ENCODE measurements at regions of chr1 and their contacts with region 1.

Region 1: DNA sequence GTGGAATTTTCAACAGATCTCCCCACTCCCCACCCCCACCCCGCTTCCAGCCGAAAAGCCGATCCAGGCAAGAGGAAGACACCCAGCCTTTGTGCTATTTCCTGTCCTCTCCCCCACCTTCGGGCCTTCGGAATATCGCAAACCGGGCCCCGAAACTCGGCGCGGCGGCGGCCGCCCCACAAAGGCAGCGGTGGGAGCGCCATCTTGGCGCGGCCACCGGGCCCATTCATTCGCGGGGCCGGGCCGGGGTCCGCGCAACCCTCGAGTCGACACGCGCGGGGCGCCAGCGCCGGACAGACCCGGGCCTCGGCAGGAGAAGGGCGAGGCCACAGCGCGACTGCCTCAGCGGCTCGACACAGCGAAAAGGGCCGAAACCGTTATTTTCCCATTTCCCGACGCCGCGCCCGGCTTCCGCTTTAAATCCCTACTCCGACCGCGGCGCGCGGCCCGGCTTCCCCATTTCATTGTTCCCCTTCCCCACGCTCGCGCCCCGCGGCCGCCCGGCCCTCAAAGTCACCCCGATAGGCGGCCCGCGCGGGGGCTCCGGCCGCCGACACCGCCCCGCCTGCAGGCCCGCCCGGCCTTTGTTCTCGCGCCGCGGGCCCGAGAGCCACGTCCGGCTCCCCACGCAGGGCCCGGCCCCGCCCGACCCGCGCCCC is 911 bp downstream of the GNB1 start:
- DNase-seq: peak; percentile 69 to 86 (median 75)
- ATAC-seq: peak; percentile 4 to 34 (median 11)
- H3K4me3 ChIP-seq: peak overlapping the region; percentile 72 to 85 (median 80)
- H3K27ac ChIP-seq: peak overlapping the region; percentile 53 to 89 (median 81)
- H3K4me1 ChIP-seq: peaks cover 0 to 42% (median 4%) of the 10 kb centered on the region in 4 donors
- H3K27me3 ChIP-seq: no peaks in the 10 kb centered on the region
- CTCF ChIP-seq: no peak
- POLR2A ChIP-seq: peak; percentile 29

Region 2: GRCh38 chr1:1779706-1780597 is 110.0 kb before region 1 on chr1:
- intact Hi-C with region 1: loop called in 1 of 2 experiments (anchors 10 kb)
- DNase-seq: peak; percentile 52 to 72 (median 69)
- ATAC-seq: peak in 3 of 4 donors; percentile 0 to 5 (median 1)
- H3K4me3 ChIP-seq: peak overlapping the region in 2 of 3 donors; percentile 86 to 99
- H3K27ac ChIP-seq: peak overlapping the region; percentile 77 to 98 (median 87)
- H3K4me1 ChIP-seq: peaks cover 0 to 50% (median 20%) of the 10 kb centered on the region in 4 donors
- H3K27me3 ChIP-seq: no peaks in the 10 kb centered on the region
- CTCF ChIP-seq: no peak
- POLR2A ChIP-seq: no peak

Region 3: GRCh38 chr1:1815606-1816281 is 74.2 kb before region 1 on chr1:
- intact Hi-C with region 1: no loop called
- DNase-seq: no peak
- ATAC-seq: peak in 1 of 4 donors; percentile 24
- H3K4me3 ChIP-seq: no peak overlapping the region
- H3K27ac ChIP-seq: no peak overlapping the region
- H3K4me1 ChIP-seq: no peaks in the 10 kb centered on the region
- H3K27me3 ChIP-seq: no peaks in the 10 kb centered on the region
- CTCF ChIP-seq: no peak
- POLR2A ChIP-seq: no peak